ENCODE measurements at regions of chr2 and their contacts with region 1.

Region 1: DNA sequence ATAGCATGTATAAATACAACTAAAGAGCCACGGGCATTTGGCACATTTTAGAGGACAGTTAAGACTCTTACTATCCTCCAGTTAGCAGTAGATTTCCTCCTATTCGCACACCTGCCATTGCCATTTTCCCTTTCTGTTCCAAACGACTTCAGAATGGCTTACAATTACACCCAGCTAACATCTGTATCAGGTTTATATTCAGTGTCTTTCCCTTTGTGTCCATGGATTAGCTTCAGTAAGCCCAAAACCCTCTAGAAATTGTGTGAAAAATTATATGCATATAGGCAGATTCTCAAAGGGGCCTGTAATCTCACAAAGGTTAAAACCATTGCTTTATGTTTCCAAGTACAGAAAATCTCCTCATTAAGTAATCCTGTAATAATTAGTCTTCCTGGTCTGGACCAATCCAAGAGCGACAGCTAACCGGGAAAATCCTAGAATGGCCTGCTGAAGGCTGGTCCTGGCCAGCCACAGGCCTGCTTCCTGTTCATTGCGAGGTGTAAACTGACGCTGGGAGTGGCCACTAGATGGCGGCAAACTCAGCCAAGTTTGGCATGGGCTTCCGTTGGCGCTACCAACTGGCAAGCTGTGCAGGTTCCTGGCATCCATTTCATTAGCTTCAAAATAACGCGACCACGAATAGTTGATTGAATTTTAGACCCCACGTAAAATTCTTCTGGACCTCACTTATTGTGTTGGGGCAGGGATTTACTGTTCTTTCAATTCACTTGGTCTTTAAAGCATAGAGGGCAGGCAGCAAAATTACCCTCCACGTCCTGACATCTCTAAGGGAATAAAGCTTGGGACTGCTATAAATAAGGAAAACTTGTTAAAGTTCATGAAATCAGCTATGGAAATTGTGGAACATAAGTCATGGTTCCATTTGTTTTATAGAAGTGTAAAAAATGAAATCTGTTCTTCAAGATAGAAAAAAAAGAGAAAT is 17.1 kb downstream of the ARHGAP25 start:
- DNase-seq: peak; percentile 81 to 96 (median 93)
- ATAC-seq: peak; percentile 93
- H3K4me3 ChIP-seq: no peak overlapping the region
- H3K4me3 Mint-ChIP-seq: peak overlapping the region; percentile 61
- H3K27ac ChIP-seq: peak overlapping the region; percentile 16 to 70
- H3K27ac Mint-ChIP-seq: peak overlapping the region; percentile 87
- H3K4me1 ChIP-seq: peaks cover 70% of the 10 kb centered on the region
- H3K4me1 Mint-ChIP-seq: peaks cover 86% of the 10 kb centered on the region
- H3K27me3 ChIP-seq: no peaks in the 10 kb centered on the region
- H3K27me3 Mint-ChIP-seq: no peaks in the 10 kb centered on the region
- CTCF ChIP-seq: peak; percentile 84

Region 2: GRCh38 chr2:68167186-68167585 is 584.5 kb before region 1 on chr2:
- CTCF ChIA-PET with region 1: no interaction called
- POLR2A ChIA-PET with region 1: no interaction called
- intact Hi-C with region 1: no loop called
- DNase-seq: no peak
- ATAC-seq: no peak
- H3K4me3 ChIP-seq: no peak overlapping the region
- H3K4me3 Mint-ChIP-seq: no peak overlapping the region
- H3K27ac ChIP-seq: no peak overlapping the region
- H3K27ac Mint-ChIP-seq: no peak overlapping the region
- H3K4me1 ChIP-seq: no peaks in the 10 kb centered on the region
- H3K4me1 Mint-ChIP-seq: peaks cover 23% of the 10 kb centered on the region
- H3K27me3 ChIP-seq: no peaks in the 10 kb centered on the region
- H3K27me3 Mint-ChIP-seq: no peaks in the 10 kb centered on the region
- CTCF ChIP-seq: no peak

Region 3: DNA sequence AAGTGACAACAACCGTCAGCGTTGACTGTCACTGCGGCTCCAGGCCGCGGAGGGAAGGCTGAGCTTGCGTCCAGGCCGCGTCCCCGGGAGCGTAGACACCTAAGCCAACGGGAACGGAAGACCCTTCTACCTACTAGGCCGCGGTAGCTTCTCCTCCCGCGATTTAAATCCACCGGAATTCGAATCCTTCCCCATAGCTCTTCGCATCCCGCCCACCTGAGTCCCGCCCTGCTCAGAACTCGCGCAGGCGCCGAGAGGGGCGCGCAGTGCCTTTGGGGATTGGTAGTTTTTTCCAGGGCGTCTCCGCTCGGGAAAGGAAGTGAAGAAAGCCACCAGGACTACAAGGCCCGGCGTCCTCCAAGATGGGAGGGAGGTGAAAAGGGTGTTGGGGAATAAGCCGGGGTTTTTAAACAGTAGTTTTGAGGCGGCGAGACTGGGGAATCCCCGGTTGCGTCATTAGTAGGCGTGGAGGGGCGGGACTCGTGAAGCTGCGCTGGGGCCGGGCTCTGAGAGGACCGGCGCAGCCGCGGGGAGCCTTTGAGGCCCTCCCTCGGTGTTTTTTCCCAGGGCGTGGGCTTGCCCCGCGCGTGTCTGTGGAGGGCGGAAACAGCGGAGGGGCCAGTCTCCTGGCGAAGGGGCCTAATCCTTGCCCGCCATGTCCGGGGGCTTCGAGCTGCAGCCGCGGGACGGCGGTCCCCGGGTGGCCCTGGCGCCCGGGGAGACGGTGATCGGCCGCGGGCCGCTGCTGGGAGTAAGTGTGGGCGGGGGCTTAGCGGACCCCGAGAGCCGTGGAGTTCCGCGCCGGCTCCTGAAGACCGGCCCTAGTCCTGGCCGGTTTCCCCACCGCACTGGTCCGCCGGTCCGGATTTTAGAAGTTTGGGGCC is 284.3 kb before region 1 on chr2 and contains the starts of genes APLF and FBXO48:
- CTCF ChIA-PET with region 1: interaction called, 26 read pairs
- POLR2A ChIA-PET with region 1: interaction called, 3 read pairs
- intact Hi-C with region 1: loop called (anchors 5 kb)
- DNase-seq: peak; percentile 96 to 99 (median 98)
- ATAC-seq: peak; percentile 87
- H3K4me3 ChIP-seq: peak within 1 kb of the TSS; percentile 83 to 88
- H3K4me3 Mint-ChIP-seq: peak within 1 kb of the TSS; percentile 96
- H3K27ac ChIP-seq: peak within 1 kb of the TSS; percentile 82 to 89
- H3K27ac Mint-ChIP-seq: peak within 1 kb of the TSS; percentile 97
- H3K4me1 ChIP-seq: peaks cover 26% of the 10 kb centered on the region
- H3K4me1 Mint-ChIP-seq: peaks cover 44% of the 10 kb centered on the region
- H3K27me3 ChIP-seq: no peaks in the 10 kb centered on the region
- H3K27me3 Mint-ChIP-seq: no peaks in the 10 kb centered on the region
- CTCF ChIP-seq: no peak
- total RNA-seq, gene APLF: 4.1 to 4.2 TPM
- total RNA-seq, gene FBXO48: 0.22 to 0.30 TPM

Region 4: GRCh38 chr2:68721482-68722101 is 30.1 kb before region 1 on chr2:
- CTCF ChIA-PET with region 1: interaction called, 32 read pairs
- POLR2A ChIA-PET with region 1: interaction called, 5 read pairs
- intact Hi-C with region 1: no loop called
- DNase-seq: peak in 7 of 9 experiments; percentile 16 to 76 (median 46)
- ATAC-seq: peak; percentile 73
- H3K4me3 ChIP-seq: peak overlapping the region in 1 of 2 experiments; percentile 4
- H3K4me3 Mint-ChIP-seq: peak overlapping the region; percentile 72
- H3K27ac ChIP-seq: peak overlapping the region in 1 of 2 experiments; percentile 63
- H3K27ac Mint-ChIP-seq: peak overlapping the region; percentile 87
- H3K4me1 ChIP-seq: peaks cover 71% of the 10 kb centered on the region
- H3K4me1 Mint-ChIP-seq: peaks cover 82% of the 10 kb centered on the region
- H3K27me3 ChIP-seq: no peaks in the 10 kb centered on the region
- H3K27me3 Mint-ChIP-seq: no peaks in the 10 kb centered on the region
- CTCF ChIP-seq: no peak

Region 5: GRCh38 chr2:68766376-68766845 is 14.7 kb after region 1 on chr2:
- CTCF ChIA-PET with region 1: interaction called, 61 read pairs
- POLR2A ChIA-PET with region 1: interaction called, 41 read pairs
- intact Hi-C with region 1: loop called (anchors 1 kb)
- DNase-seq: peak; percentile 37 to 91 (median 75)
- ATAC-seq: peak; percentile 62
- H3K4me3 ChIP-seq: peak overlapping the region; percentile 25 to 34
- H3K4me3 Mint-ChIP-seq: peak overlapping the region; percentile 81
- H3K27ac ChIP-seq: peak overlapping the region; percentile 73 to 88
- H3K27ac Mint-ChIP-seq: peak overlapping the region; percentile 100
- H3K4me1 ChIP-seq: peaks cover 98% of the 10 kb centered on the region
- H3K4me1 Mint-ChIP-seq: peaks cover 95% of the 10 kb centered on the region
- H3K27me3 ChIP-seq: no peaks in the 10 kb centered on the region
- H3K27me3 Mint-ChIP-seq: no peaks in the 10 kb centered on the region
- CTCF ChIP-seq: no peak

Region 6: GRCh38 chr2:68789603-68790002 is 37.9 kb after region 1 on chr2:
- CTCF ChIA-PET with region 1: interaction called, 63 read pairs
- POLR2A ChIA-PET with region 1: interaction called, 9 read pairs
- intact Hi-C with region 1: loop called (anchors 5 kb)
- DNase-seq: peak in 2 of 9 experiments; percentile 45 to 53
- ATAC-seq: peak; percentile 45
- H3K4me3 ChIP-seq: no peak overlapping the region
- H3K4me3 Mint-ChIP-seq: no peak overlapping the region
- H3K27ac ChIP-seq: peak overlapping the region in 1 of 2 experiments; percentile 31
- H3K27ac Mint-ChIP-seq: peak overlapping the region; percentile 76
- H3K4me1 ChIP-seq: peaks cover 42% of the 10 kb centered on the region
- H3K4me1 Mint-ChIP-seq: peaks cover 50% of the 10 kb centered on the region
- H3K27me3 ChIP-seq: no peaks in the 10 kb centered on the region
- H3K27me3 Mint-ChIP-seq: no peaks in the 10 kb centered on the region
- CTCF ChIP-seq: no peak

Region 7: GRCh38 chr2:68828887-68829708 is 77.4 kb after region 1 on chr2:
- CTCF ChIA-PET with region 1: interaction called, 127 read pairs
- POLR2A ChIA-PET with region 1: interaction called, 8 read pairs
- intact Hi-C with region 1: loop called in 1 of 2 experiments (anchors 2 kb)
- DNase-seq: peak; percentile 17 to 87 (median 73)
- ATAC-seq: peak; percentile 61
- H3K4me3 ChIP-seq: no peak overlapping the region
- H3K4me3 Mint-ChIP-seq: peak overlapping the region; percentile 53
- H3K27ac ChIP-seq: peak overlapping the region; percentile 26 to 70
- H3K27ac Mint-ChIP-seq: peak overlapping the region; percentile 92
- H3K4me1 ChIP-seq: peaks cover 51% of the 10 kb centered on the region
- H3K4me1 Mint-ChIP-seq: peaks cover 67% of the 10 kb centered on the region
- H3K27me3 ChIP-seq: no peaks in the 10 kb centered on the region
- H3K27me3 Mint-ChIP-seq: no peaks in the 10 kb centered on the region
- CTCF ChIP-seq: no peak

Region 8: GRCh38 chr2:68909793-68910674 is 158.4 kb after region 1 on chr2:
- CTCF ChIA-PET with region 1: interaction called, 62 read pairs
- POLR2A ChIA-PET with region 1: interaction called, 15 read pairs
- intact Hi-C with region 1: loop called (anchors 1 kb)
- DNase-seq: peak; percentile 36 to 82 (median 70)
- ATAC-seq: peak; percentile 21
- H3K4me3 ChIP-seq: no peak overlapping the region
- H3K4me3 Mint-ChIP-seq: no peak overlapping the region
- H3K27ac ChIP-seq: no peak overlapping the region
- H3K27ac Mint-ChIP-seq: peak overlapping the region; percentile 42
- H3K4me1 ChIP-seq: peaks cover 34% of the 10 kb centered on the region
- H3K4me1 Mint-ChIP-seq: peaks cover 34% of the 10 kb centered on the region
- H3K27me3 ChIP-seq: no peaks in the 10 kb centered on the region
- H3K27me3 Mint-ChIP-seq: no peaks in the 10 kb centered on the region
- CTCF ChIP-seq: peak; percentile 98

Measured in CD8-positive, alpha-beta T cell (primary cell).